HAP-1 (cell line): ENCODE measurements at regions of chr5 and their contacts with region 1.

Region 1: DNA sequence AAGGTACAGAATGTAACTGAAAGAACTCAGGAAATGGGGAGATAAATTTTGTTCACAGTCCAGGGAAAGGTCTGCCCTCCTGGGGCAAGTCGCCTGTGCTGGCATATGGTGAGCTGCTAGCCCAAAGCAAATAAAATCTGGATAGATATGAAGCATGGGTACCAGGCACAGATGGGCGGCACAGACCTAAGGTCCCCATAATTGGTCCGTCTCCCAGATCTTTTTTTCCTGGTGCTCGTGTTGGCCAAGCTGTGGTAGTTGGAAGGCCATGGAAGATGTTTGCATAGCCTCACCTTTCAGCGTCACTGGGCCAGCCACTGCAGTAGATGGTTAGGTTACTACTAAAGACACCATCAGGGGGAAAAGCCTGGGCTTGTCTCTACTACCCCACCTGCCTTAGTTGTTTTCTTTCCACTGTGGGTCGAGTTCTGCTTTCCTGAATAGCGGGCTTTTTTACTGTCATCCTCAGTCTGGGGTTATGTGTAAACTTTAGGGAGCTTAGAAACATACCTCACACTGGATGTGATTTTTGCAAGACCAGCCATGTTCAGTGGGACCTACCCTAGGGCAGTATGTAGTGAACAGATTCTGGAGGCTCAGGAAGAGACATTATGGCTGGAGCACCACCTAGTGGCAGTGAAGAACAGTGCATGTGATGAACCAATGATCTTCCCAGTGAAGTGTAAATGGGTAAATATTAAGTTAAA is 24.2 kb upstream of the GLRX start:
- DNase-seq: peak; percentile 71 to 78
- H3K4me3 ChIP-seq: no peak overlapping the region
- H3K4me1 ChIP-seq: no peaks in the 10 kb centered on the region
- H3K27me3 ChIP-seq: no peaks in the 10 kb centered on the region; the same call in 1 of the 2 replicates

Region 2: GRCh38 chr5:95631991-95632675 is 214.6 kb before region 1 on chr5:
- in situ Hi-C with region 1: loop called (anchors 10 kb)
- DNase-seq: no peak
- H3K4me3 ChIP-seq: no peak overlapping the region
- H3K4me1 ChIP-seq: no peaks in the 10 kb centered on the region
- H3K27me3 ChIP-seq: no peaks in the 10 kb centered on the region

Region 3: GRCh38 chr5:95781101-95781583 is 65.6 kb before region 1 on chr5:
- in situ Hi-C with region 1: loop called (anchors 5 kb)
- DNase-seq: peak; percentile 57 to 80
- H3K4me3 ChIP-seq: no peak overlapping the region
- H3K4me1 ChIP-seq: no peaks in the 10 kb centered on the region
- H3K27me3 ChIP-seq: no peaks in the 10 kb centered on the region